CD8-positive, alpha-beta T cell (primary cell): ENCODE measurements at regions of chr16 and their contacts with region 1.

Region 1: GRCh38 chr16:21599233-21600030 is at the start of gene METTL9:
- DNase-seq: peak; percentile 92 to 97 (median 94)
- ATAC-seq: peak; percentile 91
- H3K4me3 ChIP-seq: peak within 1 kb of the TSS; percentile 69 to 96
- H3K4me3 Mint-ChIP-seq: peak within 1 kb of the TSS; percentile 87
- H3K27ac ChIP-seq: peak within 1 kb of the TSS; percentile 84 to 91
- H3K27ac Mint-ChIP-seq: peak within 1 kb of the TSS; percentile 96
- H3K4me1 ChIP-seq: peaks cover 47% of the 10 kb centered on the region
- H3K4me1 Mint-ChIP-seq: peaks cover 62% of the 10 kb centered on the region
- H3K27me3 ChIP-seq: no peaks in the 10 kb centered on the region
- H3K27me3 Mint-ChIP-seq: no peaks in the 10 kb centered on the region
- CTCF ChIP-seq: no peak
- total RNA-seq, gene METTL9: 93.8 to 99.0 TPM

Region 2: DNA sequence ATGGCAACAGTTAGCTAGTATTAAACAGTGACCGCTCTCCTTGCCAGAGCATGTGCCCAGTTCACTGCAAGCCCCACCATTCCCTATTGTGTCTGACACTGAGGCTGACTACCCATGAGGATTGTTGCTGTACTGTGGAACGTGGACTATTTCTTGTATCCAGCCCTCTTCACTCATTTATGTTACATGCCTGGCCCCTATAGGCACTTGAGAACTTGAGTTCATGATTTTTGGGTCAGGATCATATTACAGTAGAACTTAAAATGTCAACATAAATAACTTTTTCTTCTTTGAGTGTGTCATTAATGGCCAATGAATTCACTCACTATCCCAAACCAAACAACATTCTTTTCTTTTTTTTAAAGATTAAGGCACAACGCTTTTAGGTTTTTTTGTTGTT is 643.1 kb before region 1 on chr16:
- CTCF ChIA-PET with region 1: no interaction called
- POLR2A ChIA-PET with region 1: no interaction called
- intact Hi-C with region 1: no loop called
- DNase-seq: no peak
- ATAC-seq: no peak
- H3K4me3 ChIP-seq: no peak overlapping the region
- H3K4me3 Mint-ChIP-seq: no peak overlapping the region
- H3K27ac ChIP-seq: no peak overlapping the region
- H3K27ac Mint-ChIP-seq: no peak overlapping the region
- H3K4me1 ChIP-seq: no peaks in the 10 kb centered on the region
- H3K4me1 Mint-ChIP-seq: no peaks in the 10 kb centered on the region
- H3K27me3 ChIP-seq: no peaks in the 10 kb centered on the region
- H3K27me3 Mint-ChIP-seq: no peaks in the 10 kb centered on the region
- CTCF ChIP-seq: no peak

Region 3: GRCh38 chr16:21584817-21585216 is 14.6 kb before region 1 on chr16:
- CTCF ChIA-PET with region 1: interaction called, 27 read pairs
- POLR2A ChIA-PET with region 1: no interaction called
- intact Hi-C with region 1: no loop called
- DNase-seq: no peak
- ATAC-seq: no peak
- H3K4me3 ChIP-seq: no peak overlapping the region
- H3K4me3 Mint-ChIP-seq: no peak overlapping the region
- H3K27ac ChIP-seq: no peak overlapping the region
- H3K27ac Mint-ChIP-seq: no peak overlapping the region
- H3K4me1 ChIP-seq: no peaks in the 10 kb centered on the region
- H3K4me1 Mint-ChIP-seq: peaks cover 2% of the 10 kb centered on the region
- H3K27me3 ChIP-seq: no peaks in the 10 kb centered on the region
- H3K27me3 Mint-ChIP-seq: no peaks in the 10 kb centered on the region
- CTCF ChIP-seq: no peak

Region 4: GRCh38 chr16:21638573-21638975 is 39.1 kb after region 1 on chr16:
- CTCF ChIA-PET with region 1: interaction called, 14 read pairs
- POLR2A ChIA-PET with region 1: interaction called, 5 read pairs
- intact Hi-C with region 1: loop called in 1 of 2 experiments (anchors 2 kb)
- DNase-seq: peak in 2 of 9 experiments; percentile 27 to 53
- ATAC-seq: peak; percentile 47
- H3K4me3 ChIP-seq: no peak overlapping the region
- H3K4me3 Mint-ChIP-seq: peak overlapping the region; percentile 4
- H3K27ac ChIP-seq: peak overlapping the region; percentile 8 to 60
- H3K27ac Mint-ChIP-seq: peak overlapping the region; percentile 87
- H3K4me1 ChIP-seq: peaks cover 29% of the 10 kb centered on the region
- H3K4me1 Mint-ChIP-seq: peaks cover 31% of the 10 kb centered on the region
- H3K27me3 ChIP-seq: no peaks in the 10 kb centered on the region
- H3K27me3 Mint-ChIP-seq: no peaks in the 10 kb centered on the region
- CTCF ChIP-seq: no peak

Region 5: GRCh38 chr16:21952793-21953540 is 353.5 kb after region 1 on chr16 and contains the start of gene UQCRC2:
- CTCF ChIA-PET with region 1: no interaction called
- POLR2A ChIA-PET with region 1: no interaction called
- intact Hi-C with region 1: loop called in 1 of 2 experiments (anchors 5 kb)
- DNase-seq: peak; percentile 70 to 96 (median 87)
- ATAC-seq: peak; percentile 89
- H3K4me3 ChIP-seq: peak within 1 kb of the TSS; percentile 85 to 87
- H3K4me3 Mint-ChIP-seq: peak within 1 kb of the TSS; percentile 100
- H3K27ac ChIP-seq: peak within 1 kb of the TSS; percentile 93 to 95
- H3K27ac Mint-ChIP-seq: peak within 1 kb of the TSS; percentile 98
- H3K4me1 ChIP-seq: peaks cover 36% of the 10 kb centered on the region
- H3K4me1 Mint-ChIP-seq: peaks cover 69% of the 10 kb centered on the region
- H3K27me3 ChIP-seq: no peaks in the 10 kb centered on the region
- H3K27me3 Mint-ChIP-seq: no peaks in the 10 kb centered on the region
- CTCF ChIP-seq: no peak
- total RNA-seq, gene UQCRC2: 177 to 186 TPM

Region 6: GRCh38 chr16:23149349-23149996 is 1550.0 kb after region 1 on chr16 and contains the start of gene USP31:
- CTCF ChIA-PET with region 1: no interaction called
- POLR2A ChIA-PET with region 1: no interaction called
- intact Hi-C with region 1: loop called in 1 of 2 experiments (anchors 5 kb)
- DNase-seq: peak; percentile 76 to 95 (median 87)
- ATAC-seq: peak; percentile 95
- H3K4me3 ChIP-seq: peak within 1 kb of the TSS; percentile 64 to 78
- H3K4me3 Mint-ChIP-seq: peak within 1 kb of the TSS; percentile 94
- H3K27ac ChIP-seq: peak within 1 kb of the TSS; percentile 17 to 37
- H3K27ac Mint-ChIP-seq: peak within 1 kb of the TSS; percentile 64
- H3K4me1 ChIP-seq: peaks cover 10% of the 10 kb centered on the region
- H3K4me1 Mint-ChIP-seq: peaks cover 20% of the 10 kb centered on the region
- H3K27me3 ChIP-seq: no peaks in the 10 kb centered on the region
- H3K27me3 Mint-ChIP-seq: peaks cover 5% of the 10 kb centered on the region
- CTCF ChIP-seq: no peak
- total RNA-seq, gene USP31: 1.6 to 1.8 TPM